ENCODE measurements at regions of chr1 and their contacts with region 1.

Region 1: DNA sequence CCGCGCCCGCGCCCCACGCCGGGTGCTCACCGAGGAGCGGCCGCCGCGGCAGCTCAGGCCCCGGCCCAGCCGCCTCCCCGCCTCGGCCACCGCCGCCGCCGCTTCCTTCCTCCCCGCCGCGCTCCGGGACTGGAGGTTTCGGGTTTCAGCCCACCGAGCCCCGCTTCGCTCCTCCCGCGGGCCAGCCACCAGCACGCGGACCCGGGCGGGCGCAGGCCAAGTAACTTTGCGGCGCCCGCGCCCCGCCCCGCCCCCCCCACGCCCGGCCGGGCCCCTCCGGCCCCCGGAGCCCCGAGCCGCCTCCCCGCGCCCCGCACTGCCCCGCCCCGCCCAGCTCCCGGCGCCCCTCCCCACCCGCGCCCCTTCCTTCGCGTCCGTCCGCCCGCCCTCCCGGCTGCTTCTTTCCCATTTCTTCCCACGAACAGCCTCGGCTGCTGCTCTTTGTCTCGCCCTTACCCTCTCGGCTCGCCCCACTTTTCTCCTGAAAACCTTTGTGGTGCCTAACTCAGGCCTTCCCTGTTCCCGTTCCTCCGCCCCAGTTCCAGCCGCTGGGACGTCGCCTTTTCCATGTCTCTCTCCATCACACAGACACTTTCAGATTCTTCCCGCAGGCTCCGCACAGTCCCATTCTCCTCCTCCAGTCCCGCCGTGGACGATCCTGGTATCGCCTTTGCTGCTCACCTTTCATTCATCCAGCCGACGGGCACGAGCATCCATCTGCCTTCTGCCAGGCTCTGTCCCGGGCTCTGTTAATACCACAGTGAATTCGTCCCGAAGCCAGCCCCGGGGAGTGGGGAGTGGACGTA is at the start of gene GPR161:
- DNase-seq: peak; percentile 36
- H3K4me3 ChIP-seq: peak within 1 kb of the TSS; percentile 63 to 70
- H3K27ac ChIP-seq: peak within 1 kb of the TSS; percentile 86 to 87
- H3K4me1 ChIP-seq: no peaks in the 10 kb centered on the region
- H3K27me3 ChIP-seq: no peaks in the 10 kb centered on the region
- CTCF ChIP-seq: no peak
- POLR2A ChIP-seq: no peak
- total RNA-seq, gene GPR161: 4.5 to 23.3 TPM

Region 2: DNA sequence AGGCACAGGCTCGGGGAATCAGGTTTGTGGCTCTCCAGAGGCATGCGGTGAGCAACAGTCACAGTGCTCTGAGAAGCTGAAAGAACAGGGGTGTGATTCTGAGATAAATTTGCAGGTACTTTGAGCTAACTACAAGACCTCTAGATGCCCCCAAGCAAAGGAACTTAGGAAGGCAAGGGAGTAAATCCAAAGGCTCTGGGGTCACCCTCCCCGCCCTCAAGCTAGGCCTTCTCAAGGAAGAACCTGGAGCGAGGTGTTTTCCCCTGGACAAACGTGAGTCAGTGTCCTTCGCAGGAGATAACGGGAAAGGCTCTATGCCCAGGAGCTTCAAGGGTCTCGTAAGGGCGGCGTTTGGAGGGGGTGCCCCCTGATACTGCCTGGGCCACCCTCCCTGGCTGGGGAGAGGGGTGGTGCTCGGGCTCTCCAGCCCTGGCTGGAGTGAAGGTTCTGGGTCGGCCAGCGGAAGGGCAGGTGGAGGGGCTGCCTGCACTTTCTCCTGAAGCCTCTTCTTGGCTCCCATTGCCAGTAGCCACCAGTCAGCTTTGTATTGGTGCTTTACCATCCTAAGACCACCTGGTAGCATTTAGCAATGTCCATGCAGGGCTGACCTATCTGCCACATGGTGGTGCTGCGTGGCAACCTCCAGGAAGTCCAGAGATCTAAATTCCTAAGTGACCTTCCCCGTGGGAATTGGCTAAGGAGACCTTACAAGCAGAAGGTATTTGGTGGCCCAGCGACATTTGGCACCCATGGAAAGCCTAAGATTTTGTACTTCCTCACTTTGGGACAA is 44.2 kb before region 1 on chr1:
- intact Hi-C with region 1: loop called (anchors 5 kb)
- DNase-seq: no peak
- H3K4me3 ChIP-seq: no peak overlapping the region
- H3K27ac ChIP-seq: peak overlapping the region; percentile 31 to 47
- H3K4me1 ChIP-seq: no peaks in the 10 kb centered on the region
- H3K27me3 ChIP-seq: no peaks in the 10 kb centered on the region
- CTCF ChIP-seq: peak in 2 of 4 experiments; percentile 21 to 22
- POLR2A ChIP-seq: no peak

Region 3: GRCh38 chr1:168202941-168203654 is 66.2 kb after region 1 on chr1:
- intact Hi-C with region 1: no loop called
- DNase-seq: no peak
- H3K4me3 ChIP-seq: no peak overlapping the region
- H3K27ac ChIP-seq: no peak overlapping the region
- H3K4me1 ChIP-seq: no peaks in the 10 kb centered on the region
- H3K27me3 ChIP-seq: no peaks in the 10 kb centered on the region
- CTCF ChIP-seq: no peak
- POLR2A ChIP-seq: no peak

Region 4: DNA sequence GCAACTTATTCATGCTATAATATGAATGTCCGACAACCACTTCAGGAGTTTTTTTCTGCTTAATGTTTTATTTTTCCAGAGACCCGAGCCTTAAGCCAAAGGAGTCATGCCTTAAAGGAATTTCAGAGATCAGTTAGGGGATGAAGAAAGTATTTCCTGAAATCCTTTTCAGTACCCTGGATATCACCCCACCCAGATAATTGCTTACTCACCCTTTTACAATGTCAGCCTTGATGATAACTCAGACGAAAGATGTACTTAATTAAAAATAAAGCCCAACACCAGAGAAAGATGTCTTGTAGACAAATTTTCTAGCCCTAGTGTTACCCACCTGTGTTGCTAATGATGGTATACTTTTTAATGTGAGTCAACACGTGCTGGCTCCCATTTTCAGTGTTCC is 282.8 kb after region 1 on chr1:
- intact Hi-C with region 1: no loop called
- DNase-seq: no peak
- H3K4me3 ChIP-seq: no peak overlapping the region
- H3K27ac ChIP-seq: no peak overlapping the region
- H3K4me1 ChIP-seq: no peaks in the 10 kb centered on the region
- H3K27me3 ChIP-seq: no peaks in the 10 kb centered on the region
- CTCF ChIP-seq: no peak
- POLR2A ChIP-seq: no peak

Measured in prostate gland (tissue), 2 donors.